ENCODE measurements at regions of chr12 and their contacts with region 1.

Region 1: DNA sequence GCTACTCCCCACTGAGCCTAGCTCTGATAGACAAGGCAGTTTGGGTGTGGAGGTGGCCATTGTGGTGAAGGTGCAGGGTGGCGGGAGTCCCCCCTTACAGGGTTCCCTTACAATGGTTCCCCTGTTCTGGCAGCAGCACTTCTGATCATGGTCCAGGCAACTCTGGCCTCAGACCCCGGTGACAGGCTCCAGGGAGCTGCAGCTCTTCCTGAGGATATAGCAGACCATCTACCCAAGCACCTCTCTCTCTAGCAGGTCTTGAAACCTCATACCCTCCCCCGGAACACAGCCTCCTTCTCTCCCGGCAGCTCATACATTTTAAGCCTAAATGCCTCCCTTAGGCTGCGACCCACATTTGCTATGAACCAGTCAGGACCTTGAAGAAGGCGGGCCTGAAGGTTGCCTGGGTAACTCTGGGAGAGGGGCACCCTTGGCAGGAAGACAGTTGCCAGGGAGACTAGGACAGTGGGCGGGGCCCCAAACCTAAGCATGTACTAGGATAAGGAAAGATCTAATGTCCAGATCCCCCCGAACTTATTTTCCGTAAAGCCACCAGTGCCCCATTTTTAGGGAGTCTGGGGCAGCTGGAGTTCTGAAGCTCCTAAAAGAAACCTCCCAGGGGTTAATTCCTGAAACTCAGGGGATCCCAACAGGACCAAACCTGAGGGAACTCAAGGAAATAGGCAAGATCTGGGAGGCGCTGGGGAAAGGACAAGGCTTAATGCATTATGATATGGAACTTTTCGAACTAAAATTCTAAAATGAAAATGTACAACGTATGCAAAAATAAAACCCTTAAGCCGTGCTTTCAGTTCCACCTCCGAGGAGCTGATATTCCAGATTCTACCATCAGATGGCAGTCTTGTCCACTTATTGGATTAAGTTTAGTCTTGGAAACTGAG is 4.5 kb upstream of the GDF11 start:
- DNase-seq: peak; percentile 76

Region 2: GRCh38 chr12:55715833-55716581 is 22.4 kb before region 1 on chr12 and contains the start of gene BLOC1S1:
- CTCF ChIA-PET with region 1: interaction called, 17 read pairs
- POLR2A ChIA-PET with region 1: interaction called, 3 read pairs
- DNase-seq: peak; percentile 92

Region 3: DNA sequence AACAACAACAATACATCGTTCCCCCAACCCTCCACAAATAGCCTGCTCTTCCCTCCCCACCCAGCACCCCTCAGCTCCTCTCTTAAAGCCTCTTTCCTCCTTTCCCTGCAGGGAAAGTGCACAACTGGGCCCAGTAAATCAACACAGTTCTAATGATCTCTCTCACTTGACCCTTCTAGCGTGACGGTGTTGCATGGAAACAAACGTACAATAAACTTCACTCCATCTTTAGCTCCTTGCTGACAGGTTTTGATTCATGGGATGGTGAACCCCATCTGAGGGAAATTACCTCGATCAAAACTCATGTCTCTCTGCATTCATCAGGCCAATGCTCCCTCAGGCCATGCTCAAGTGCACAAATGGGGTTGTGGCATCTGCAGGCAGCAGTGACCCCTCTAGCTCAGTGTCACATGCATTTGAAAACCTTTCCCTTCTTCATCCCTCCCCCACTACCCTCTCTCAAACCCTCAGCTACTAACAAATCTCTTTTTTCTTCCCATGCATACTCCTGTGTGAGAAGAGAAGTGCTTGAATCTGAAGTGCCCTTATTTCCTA is 27.4 kb after region 1 on chr12:
- CTCF ChIA-PET with region 1: no interaction called
- POLR2A ChIA-PET with region 1: no interaction called
- DNase-seq: no peak

Region 4: GRCh38 chr12:55817346-55818139 is 79.2 kb after region 1 on chr12 and contains the starts of genes ORMDL2 and SARNP:
- CTCF ChIA-PET with region 1: interaction called, 13 read pairs
- POLR2A ChIA-PET with region 1: interaction called, 28 read pairs
- DNase-seq: peak; percentile 96

Region 5: DNA sequence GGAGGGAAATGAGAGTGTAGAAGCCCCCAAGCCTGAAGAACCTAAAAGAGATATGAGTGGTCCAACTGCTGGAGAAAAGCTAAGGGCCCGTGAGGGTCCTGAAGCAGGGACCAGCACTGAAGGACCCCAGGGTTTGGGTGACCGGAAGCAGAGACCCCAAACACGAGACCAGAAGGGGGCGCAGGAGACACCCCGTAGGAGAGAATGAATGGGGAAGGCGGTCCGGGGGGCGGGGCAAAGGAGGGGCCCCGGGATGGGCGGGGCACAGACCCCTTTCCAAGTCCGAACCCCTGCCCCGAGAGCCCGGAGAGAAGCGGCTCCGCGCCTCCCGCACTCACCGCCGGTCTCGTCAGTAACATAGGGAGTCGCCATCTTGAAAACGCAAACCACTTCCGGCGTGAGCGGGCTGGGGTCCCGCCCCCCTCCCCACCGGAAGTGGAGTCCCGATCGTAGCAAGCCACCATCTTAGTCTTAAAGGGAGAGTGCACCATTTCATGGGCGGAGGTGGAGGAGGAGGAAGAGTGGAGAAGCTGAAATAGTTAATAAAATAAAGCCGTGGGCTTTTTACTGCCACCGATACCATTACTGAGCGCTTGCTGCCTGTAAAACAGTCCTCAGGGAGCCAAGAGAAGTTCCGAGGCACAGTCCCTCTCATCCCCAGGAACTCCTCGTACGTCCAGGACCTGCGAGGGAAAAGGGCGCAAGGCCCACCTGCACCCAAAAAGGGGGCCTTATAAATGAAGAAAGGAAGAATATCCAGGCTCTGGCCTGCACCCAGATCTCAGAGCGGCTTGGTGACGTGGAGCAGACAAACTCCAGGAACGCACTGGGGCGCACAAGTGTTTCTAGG is 188.6 kb after region 1 on chr12:
- CTCF ChIA-PET with region 1: interaction called, 4 read pairs
- POLR2A ChIA-PET with region 1: interaction called, 10 read pairs
- DNase-seq: peak; percentile 92